ENCODE measurements at regions of chr11 and their contacts with region 1.

Region 1: GRCh38 chr11:62905927-62906531 is 15.1 kb downstream of the CHRM1 start:
- DNase-seq: peak; percentile 83
- ATAC-seq: peak; percentile 81
- H3K4me3 ChIP-seq: no peak overlapping the region
- H3K4me3 Mint-ChIP-seq: no peak overlapping the region
- H3K27ac ChIP-seq: no peak overlapping the region
- H3K27ac Mint-ChIP-seq: no peak overlapping the region
- H3K4me1 ChIP-seq: no peaks in the 10 kb centered on the region
- H3K4me1 Mint-ChIP-seq: peaks cover 2% of the 10 kb centered on the region
- H3K27me3 ChIP-seq: peaks cover 0 to 11% (median 5%) of the 10 kb centered on the region in 4 experiments
- H3K27me3 Mint-ChIP-seq: peaks cover 33% of the 10 kb centered on the region
- CTCF ChIP-seq: peak; percentile 99

Region 2: GRCh38 chr11:62556108-62556871 is 349.7 kb before region 1 on chr11:
- CTCF ChIA-PET with region 1: no interaction called
- POLR2A ChIA-PET with region 1: no interaction called
- intact Hi-C with region 1: no loop called
- DNase-seq: peak; percentile 75
- ATAC-seq: peak; percentile 37
- H3K4me3 ChIP-seq: peak overlapping the region in 4 of 5 experiments; percentile 0 to 53 (median 26)
- H3K4me3 Mint-ChIP-seq: peak overlapping the region; percentile 80
- H3K27ac ChIP-seq: peak overlapping the region; percentile 98 to 99
- H3K27ac Mint-ChIP-seq: peak overlapping the region; percentile 96
- H3K4me1 ChIP-seq: peaks cover 65 to 84% of the 10 kb centered on the region in 2 donors
- H3K4me1 Mint-ChIP-seq: peaks cover 74% of the 10 kb centered on the region
- H3K27me3 ChIP-seq: no peaks in the 10 kb centered on the region
- H3K27me3 Mint-ChIP-seq: no peaks in the 10 kb centered on the region
- CTCF ChIP-seq: no peak

Region 3: DNA sequence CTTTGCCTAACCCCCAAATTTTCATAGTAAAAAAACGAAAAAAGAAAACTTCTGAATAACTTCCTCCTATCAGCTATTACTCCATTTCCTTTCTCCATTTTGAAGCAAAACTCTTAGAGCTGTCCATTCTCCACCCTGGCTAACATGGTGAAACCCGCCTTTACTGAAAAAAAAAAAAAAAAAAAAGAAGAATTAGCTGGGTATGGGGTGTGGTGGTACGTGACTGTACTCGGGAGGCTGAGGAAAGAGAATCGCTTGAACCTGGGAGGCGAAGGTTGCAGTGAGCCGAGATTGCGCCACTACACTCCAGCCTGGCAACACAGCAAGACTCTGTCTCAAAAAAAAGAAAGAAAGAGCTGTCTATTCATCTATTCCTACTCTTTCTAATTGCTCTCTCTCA is 89.5 kb before region 1 on chr11:
- CTCF ChIA-PET with region 1: no interaction called
- POLR2A ChIA-PET with region 1: no interaction called
- intact Hi-C with region 1: no loop called
- DNase-seq: no peak
- ATAC-seq: no peak
- H3K4me3 ChIP-seq: no peak overlapping the region
- H3K4me3 Mint-ChIP-seq: no peak overlapping the region
- H3K27ac ChIP-seq: no peak overlapping the region
- H3K27ac Mint-ChIP-seq: no peak overlapping the region
- H3K4me1 ChIP-seq: no peaks in the 10 kb centered on the region
- H3K4me1 Mint-ChIP-seq: no peaks in the 10 kb centered on the region
- H3K27me3 ChIP-seq: no peaks in the 10 kb centered on the region
- H3K27me3 Mint-ChIP-seq: no peaks in the 10 kb centered on the region
- CTCF ChIP-seq: no peak

Region 4: DNA sequence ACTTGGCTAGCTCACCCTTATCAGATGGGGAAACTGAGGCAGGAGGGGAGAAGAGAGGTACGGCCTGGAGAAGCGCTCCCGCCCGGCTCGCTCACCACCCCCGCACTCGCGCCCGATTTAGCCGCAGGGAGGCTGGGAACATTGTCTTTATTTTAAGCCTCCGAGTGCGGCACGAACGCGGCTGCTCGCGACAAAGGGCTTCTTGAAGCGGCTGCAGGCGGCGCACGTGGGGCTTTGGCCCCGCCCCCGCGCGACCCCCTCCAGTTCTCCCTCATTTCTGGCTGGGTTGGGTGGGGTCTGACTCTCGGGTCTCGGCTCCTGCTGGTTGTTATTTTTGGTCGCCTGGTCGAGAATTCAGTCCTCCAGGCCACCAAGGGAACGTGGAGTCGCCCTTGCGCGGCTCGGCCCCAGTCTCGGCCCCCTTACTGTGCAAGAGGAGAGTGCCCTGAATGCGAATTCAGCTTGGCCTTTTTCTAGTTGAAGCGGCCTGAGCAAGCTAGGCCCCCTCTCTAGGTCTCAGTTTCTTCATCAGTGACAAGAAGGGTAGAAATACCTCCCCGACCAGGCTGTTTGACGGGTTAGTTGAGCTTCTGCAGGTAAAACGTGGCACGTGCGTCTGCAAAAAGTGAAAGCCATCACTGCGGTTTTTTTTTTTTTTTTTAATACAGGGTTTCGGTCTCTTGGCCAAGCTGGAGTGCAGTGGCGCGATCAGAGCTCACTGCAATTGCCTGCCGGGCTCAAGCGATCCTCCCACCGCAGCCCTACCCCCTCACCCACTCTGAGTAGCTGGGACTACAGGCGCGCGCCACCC is 17.8 kb after region 1 on chr11:
- CTCF ChIA-PET with region 1: interaction called, 11 read pairs
- POLR2A ChIA-PET with region 1: no interaction called
- intact Hi-C with region 1: no loop called
- DNase-seq: peak; percentile 74
- ATAC-seq: peak; percentile 72
- H3K4me3 ChIP-seq: peak overlapping the region in 4 of 5 experiments; percentile 3 to 64 (median 32)
- H3K4me3 Mint-ChIP-seq: peak overlapping the region; percentile 72
- H3K27ac ChIP-seq: no peak overlapping the region
- H3K27ac Mint-ChIP-seq: no peak overlapping the region
- H3K4me1 ChIP-seq: peaks cover 39 to 41% of the 10 kb centered on the region in 2 donors
- H3K4me1 Mint-ChIP-seq: peaks cover 37% of the 10 kb centered on the region
- H3K27me3 ChIP-seq: peaks cover 0 to 73% (median 41%) of the 10 kb centered on the region in 4 experiments
- H3K27me3 Mint-ChIP-seq: peaks cover 69% of the 10 kb centered on the region
- CTCF ChIP-seq: no peak

Region 5: GRCh38 chr11:62931499-62932278 is 25.7 kb after region 1 on chr11:
- CTCF ChIA-PET with region 1: interaction called, 10 read pairs
- POLR2A ChIA-PET with region 1: no interaction called
- intact Hi-C with region 1: no loop called
- DNase-seq: no peak
- ATAC-seq: no peak
- H3K4me3 ChIP-seq: no peak overlapping the region
- H3K4me3 Mint-ChIP-seq: no peak overlapping the region
- H3K27ac ChIP-seq: no peak overlapping the region
- H3K27ac Mint-ChIP-seq: no peak overlapping the region
- H3K4me1 ChIP-seq: peaks cover 4 to 9% of the 10 kb centered on the region in 2 donors
- H3K4me1 Mint-ChIP-seq: peaks cover 7% of the 10 kb centered on the region
- H3K27me3 ChIP-seq: peaks cover 0 to 50% (median 16%) of the 10 kb centered on the region in 4 experiments
- H3K27me3 Mint-ChIP-seq: peaks cover 57% of the 10 kb centered on the region
- CTCF ChIP-seq: no peak

Region 6: GRCh38 chr11:62974848-62975522 is 69.0 kb after region 1 on chr11:
- CTCF ChIA-PET with region 1: interaction called, 35 read pairs
- POLR2A ChIA-PET with region 1: no interaction called
- intact Hi-C with region 1: no loop called
- DNase-seq: no peak
- ATAC-seq: no peak
- H3K4me3 ChIP-seq: no peak overlapping the region
- H3K4me3 Mint-ChIP-seq: no peak overlapping the region
- H3K27ac ChIP-seq: no peak overlapping the region
- H3K27ac Mint-ChIP-seq: no peak overlapping the region
- H3K4me1 ChIP-seq: no peaks in the 10 kb centered on the region
- H3K4me1 Mint-ChIP-seq: no peaks in the 10 kb centered on the region
- H3K27me3 ChIP-seq: peaks cover 0 to 3% (median 0%) of the 10 kb centered on the region in 4 experiments
- H3K27me3 Mint-ChIP-seq: peaks cover 24% of the 10 kb centered on the region
- CTCF ChIP-seq: peak; percentile 29

Region 7: GRCh38 chr11:63007920-63008319 is 101.9 kb after region 1 on chr11:
- CTCF ChIA-PET with region 1: interaction called, 12 read pairs
- POLR2A ChIA-PET with region 1: no interaction called
- intact Hi-C with region 1: no loop called
- DNase-seq: no peak
- ATAC-seq: no peak
- H3K4me3 ChIP-seq: no peak overlapping the region
- H3K4me3 Mint-ChIP-seq: no peak overlapping the region
- H3K27ac ChIP-seq: no peak overlapping the region
- H3K27ac Mint-ChIP-seq: no peak overlapping the region
- H3K4me1 ChIP-seq: no peaks in the 10 kb centered on the region
- H3K4me1 Mint-ChIP-seq: no peaks in the 10 kb centered on the region
- H3K27me3 ChIP-seq: no peaks in the 10 kb centered on the region
- H3K27me3 Mint-ChIP-seq: peaks cover 21% of the 10 kb centered on the region
- CTCF ChIP-seq: no peak

Region 8: DNA sequence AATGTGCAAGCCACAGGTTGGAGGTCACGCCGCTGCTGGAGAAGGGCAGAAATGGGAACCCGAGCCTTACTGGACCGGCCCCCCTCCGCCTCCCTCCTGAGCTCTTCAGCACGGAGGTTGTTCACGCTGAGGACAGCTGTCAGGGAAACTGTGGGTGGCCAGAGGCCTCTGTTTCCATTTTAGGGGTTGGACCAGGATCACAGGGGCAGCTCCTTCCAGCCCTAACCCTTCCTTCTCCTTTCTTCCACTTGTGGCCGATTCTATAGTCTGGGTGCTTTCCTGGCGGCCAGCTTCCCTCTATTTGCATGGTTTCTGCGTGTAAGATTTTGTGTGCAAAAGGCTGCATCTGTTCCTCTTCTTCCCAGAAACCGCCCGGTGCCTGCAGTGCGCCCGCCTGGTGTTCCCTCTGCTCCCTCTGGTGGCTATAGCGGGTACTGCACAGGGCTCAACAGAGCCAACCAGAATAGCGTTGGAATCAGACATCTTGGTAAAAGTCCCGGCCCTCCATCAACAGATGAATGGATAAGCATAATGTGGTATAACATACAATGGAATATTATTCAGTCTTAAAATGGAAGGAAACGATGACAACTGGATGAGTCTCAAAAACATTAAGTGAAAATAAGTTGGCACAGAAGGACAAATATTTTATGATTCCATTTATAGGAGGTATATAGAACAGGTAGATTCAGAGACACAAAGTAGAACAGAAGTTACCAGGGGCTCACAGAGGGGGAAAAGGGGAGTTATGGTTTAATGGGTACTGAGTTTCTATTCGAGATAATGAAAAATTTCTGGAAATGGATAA is 118.0 kb after region 1 on chr11:
- CTCF ChIA-PET with region 1: interaction called, 308 read pairs
- POLR2A ChIA-PET with region 1: no interaction called
- intact Hi-C with region 1: no loop called
- DNase-seq: peak; percentile 82
- ATAC-seq: peak; percentile 90
- H3K4me3 ChIP-seq: no peak overlapping the region
- H3K4me3 Mint-ChIP-seq: no peak overlapping the region
- H3K27ac ChIP-seq: no peak overlapping the region
- H3K27ac Mint-ChIP-seq: no peak overlapping the region
- H3K4me1 ChIP-seq: peaks cover 0 to 3% of the 10 kb centered on the region in 2 donors
- H3K4me1 Mint-ChIP-seq: peaks cover 4% of the 10 kb centered on the region
- H3K27me3 ChIP-seq: peaks cover 0 to 13% (median 0%) of the 10 kb centered on the region in 4 experiments
- H3K27me3 Mint-ChIP-seq: peaks cover 32% of the 10 kb centered on the region
- CTCF ChIP-seq: peak; percentile 100

Region 9: DNA sequence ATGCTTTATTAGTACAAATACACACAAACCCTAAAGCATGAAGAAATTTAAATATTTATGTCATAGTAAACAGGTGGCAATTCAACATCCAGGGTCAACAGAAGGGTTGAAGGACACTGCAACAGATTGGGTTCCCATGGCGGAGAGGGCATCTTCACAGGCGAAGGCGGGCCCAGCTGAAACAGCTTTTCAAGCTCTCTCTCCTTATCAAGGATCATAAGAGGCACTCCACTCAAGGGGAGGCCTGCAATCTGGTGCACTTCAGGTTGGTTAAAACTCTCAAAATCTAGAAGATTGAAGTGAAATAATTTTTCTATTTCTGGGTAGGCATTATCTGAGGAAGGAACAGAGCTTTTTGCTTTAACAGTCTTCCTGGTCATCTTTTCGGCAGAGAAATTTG is 126.4 kb after region 1 on chr11:
- CTCF ChIA-PET with region 1: interaction called, 116 read pairs
- POLR2A ChIA-PET with region 1: no interaction called
- intact Hi-C with region 1: no loop called
- DNase-seq: no peak
- ATAC-seq: no peak
- H3K4me3 ChIP-seq: no peak overlapping the region
- H3K4me3 Mint-ChIP-seq: no peak overlapping the region
- H3K27ac ChIP-seq: no peak overlapping the region
- H3K27ac Mint-ChIP-seq: no peak overlapping the region
- H3K4me1 ChIP-seq: peaks cover 0 to 2% of the 10 kb centered on the region in 2 donors
- H3K4me1 Mint-ChIP-seq: peaks cover 1% of the 10 kb centered on the region
- H3K27me3 ChIP-seq: peaks cover 0 to 4% (median 0%) of the 10 kb centered on the region in 4 experiments
- H3K27me3 Mint-ChIP-seq: peaks cover 42% of the 10 kb centered on the region
- CTCF ChIP-seq: no peak